T-cell (primary cell): ENCODE measurements at regions of chr12 and their contacts with region 1.

Region 1: DNA sequence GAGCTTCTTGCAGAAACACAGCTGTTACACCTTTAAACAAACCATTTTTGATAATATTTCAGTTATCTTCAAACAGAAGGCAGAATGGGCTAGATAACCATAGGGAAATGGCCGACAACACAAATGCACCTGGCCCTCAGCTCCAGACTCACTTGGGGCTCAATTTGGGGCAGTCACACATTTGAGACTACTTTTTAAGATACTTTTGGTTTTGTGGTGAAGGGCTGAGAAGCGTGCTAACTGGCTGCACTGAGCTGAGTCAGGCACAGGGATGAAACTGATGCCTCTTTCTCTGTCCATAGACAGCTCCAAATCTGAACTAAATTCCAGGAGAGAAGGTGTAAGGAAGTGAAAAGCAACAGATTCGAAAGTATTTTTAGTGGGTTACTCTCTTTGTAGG is 18.5 kb upstream of the GRIP1 start:
- DNase-seq: no peak
- ATAC-seq: no peak
- H3K4me3 ChIP-seq: no peak overlapping the region
- H3K4me3 Mint-ChIP-seq: no peak overlapping the region
- H3K27ac ChIP-seq: no peak overlapping the region
- H3K27ac Mint-ChIP-seq: no peak overlapping the region
- H3K4me1 ChIP-seq: peaks cover 7 to 17% of the 10 kb centered on the region in 2 experiments
- H3K4me1 Mint-ChIP-seq: peaks cover 14 to 34% (median 23%) of the 10 kb centered on the region in 3 donors
- H3K27me3 ChIP-seq: peaks cover 0 to 5% of the 10 kb centered on the region in 2 experiments
- H3K27me3 Mint-ChIP-seq: peaks cover 9 to 17% of the 10 kb centered on the region in 2 donors

Region 2: GRCh38 chr12:65695113-65695865 is 1002.1 kb before region 1 on chr12:
- CTCF ChIA-PET with region 1: no interaction called
- POLR2A ChIA-PET with region 1: no interaction called
- DNase-seq: no peak
- ATAC-seq: no peak
- H3K4me3 ChIP-seq: no peak overlapping the region
- H3K4me3 Mint-ChIP-seq: no peak overlapping the region
- H3K27ac ChIP-seq: no peak overlapping the region
- H3K27ac Mint-ChIP-seq: no peak overlapping the region
- H3K4me1 ChIP-seq: no peaks in the 10 kb centered on the region
- H3K4me1 Mint-ChIP-seq: no peaks in the 10 kb centered on the region
- H3K27me3 ChIP-seq: peaks cover 0 to 2% of the 10 kb centered on the region in 2 experiments
- H3K27me3 Mint-ChIP-seq: peaks cover 0 to 7% of the 10 kb centered on the region in 2 donors

Region 3: GRCh38 chr12:66708704-66709456 is 11.5 kb after region 1 on chr12:
- CTCF ChIA-PET with region 1: interaction called, 5 to 13 read pairs
- POLR2A ChIA-PET with region 1: no interaction called
- DNase-seq: peak in 1 of 35 experiments; percentile 47
- ATAC-seq: peak; percentile 75 to 90 (median 88)
- H3K4me3 ChIP-seq: peak overlapping the region in 1 of 2 donors; percentile 5
- H3K4me3 Mint-ChIP-seq: peak overlapping the region; percentile 22 to 73 (median 60)
- H3K27ac ChIP-seq: no peak overlapping the region
- H3K27ac Mint-ChIP-seq: peak overlapping the region; percentile 71 to 76
- H3K4me1 ChIP-seq: peaks cover 6 to 29% of the 10 kb centered on the region in 2 experiments
- H3K4me1 Mint-ChIP-seq: peaks cover 30 to 56% (median 41%) of the 10 kb centered on the region in 3 donors
- H3K27me3 ChIP-seq: no peaks in the 10 kb centered on the region
- H3K27me3 Mint-ChIP-seq: peaks cover 0 to 5% of the 10 kb centered on the region in 2 donors